ENCODE measurements at regions of chr13 and their contacts with region 1.

Region 1: DNA sequence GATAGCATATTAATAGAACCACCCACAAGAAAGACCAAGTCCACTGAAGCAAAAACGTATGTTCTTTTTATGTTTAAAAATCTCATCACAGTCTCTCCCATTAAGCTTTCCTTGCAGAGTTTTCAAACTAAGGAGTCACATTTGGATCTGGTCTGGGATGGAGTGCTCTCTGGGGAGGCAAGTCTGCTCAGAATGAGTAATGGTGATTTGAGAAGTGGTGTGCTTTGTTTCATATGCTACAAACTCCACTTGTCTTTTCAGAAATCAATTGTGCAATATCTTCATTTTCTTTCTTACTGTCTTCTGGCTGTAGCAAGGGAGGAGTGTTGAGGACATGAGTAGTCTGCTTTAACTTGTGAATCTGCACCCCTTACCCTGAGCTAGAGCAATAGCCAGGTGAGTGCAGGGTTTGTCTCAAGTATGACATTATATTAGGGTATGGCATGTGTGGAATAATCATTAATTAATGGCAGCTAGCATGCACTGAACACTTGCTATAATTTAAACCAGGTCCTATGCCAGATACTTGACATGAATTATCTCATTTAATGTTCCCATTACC is 171.6 kb downstream of the GPC6 start:
- DNase-seq: no peak
- ATAC-seq: peak; percentile 46

Region 2: DNA sequence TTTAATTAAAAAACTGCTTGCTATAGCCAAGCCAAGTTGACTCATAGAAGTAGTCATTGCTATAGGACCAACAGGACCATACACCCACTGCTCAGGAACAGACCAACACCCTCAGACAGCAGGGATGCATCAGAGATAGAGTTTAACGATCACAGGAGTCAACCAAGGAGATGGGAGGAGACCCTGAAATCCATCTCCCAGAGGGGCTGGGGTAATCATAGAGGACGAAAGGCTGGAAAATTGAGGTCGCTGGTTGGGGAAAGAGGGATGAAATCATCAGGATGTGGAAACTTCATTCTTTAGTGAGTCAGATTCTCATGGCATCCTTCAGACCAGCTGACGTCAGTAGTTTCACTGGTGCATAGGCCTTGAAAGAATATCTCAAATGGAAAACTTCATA is 332.1 kb before region 1 on chr13:
- intact Hi-C with region 1: no loop called
- DNase-seq: no peak
- ATAC-seq: no peak

Region 3: DNA sequence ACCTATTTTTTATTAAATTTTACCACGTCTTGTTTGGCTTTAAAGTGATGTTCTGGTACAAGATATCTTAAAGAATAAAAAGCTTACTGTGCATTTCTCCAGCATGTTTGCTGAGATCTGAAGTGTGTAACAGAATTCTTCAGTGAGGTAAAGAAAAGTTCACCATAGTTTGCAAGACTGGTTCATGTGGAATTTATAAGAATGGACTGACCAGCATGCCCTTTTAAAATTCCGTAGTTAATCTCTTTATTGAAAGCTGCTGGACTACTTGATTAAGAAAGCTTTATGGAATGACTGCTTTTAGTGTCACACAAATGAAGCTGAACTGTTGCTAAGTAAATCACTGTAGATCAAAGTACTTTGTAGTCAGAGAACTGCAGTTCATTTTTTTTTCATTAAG is 52.5 kb before region 1 on chr13:
- intact Hi-C with region 1: loop called (anchors 2 kb)
- DNase-seq: no peak
- ATAC-seq: no peak

Measured in sciatic nerve (tissue), 2 donors.